Activated naive CD4-positive, alpha-beta T cell treated with anti-CD3 and anti-CD28 coated beads for 36 hours (primary cell): ENCODE measurements at regions of chr10 and their contacts with region 1.

Region 1: DNA sequence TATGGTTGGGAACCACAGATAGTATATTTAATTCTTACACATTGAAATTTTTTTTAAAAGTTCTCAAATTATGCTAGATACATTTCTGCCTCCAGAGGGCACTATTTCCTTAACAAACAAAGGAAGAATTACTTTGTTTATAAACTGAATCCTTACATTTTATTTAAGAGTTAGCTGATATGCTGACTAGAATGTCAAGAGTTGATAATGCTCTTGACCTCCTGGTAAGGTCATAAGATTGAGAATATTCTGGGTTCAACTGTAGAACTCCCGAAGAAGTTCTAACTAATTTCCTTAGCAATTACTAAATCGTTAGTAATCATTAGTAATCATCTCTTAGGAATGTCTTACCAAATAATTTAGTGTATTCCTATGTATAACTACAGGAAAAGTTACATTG is 95.3 kb upstream of the CYP26C1 start:
- DNase-seq: no peak
- H3K4me3 Mint-ChIP-seq: no peak overlapping the region
- H3K27ac Mint-ChIP-seq: no peak overlapping the region
- H3K4me1 Mint-ChIP-seq: no peaks in the 10 kb centered on the region
- H3K27me3 Mint-ChIP-seq: no peaks in the 10 kb centered on the region

Region 2: DNA sequence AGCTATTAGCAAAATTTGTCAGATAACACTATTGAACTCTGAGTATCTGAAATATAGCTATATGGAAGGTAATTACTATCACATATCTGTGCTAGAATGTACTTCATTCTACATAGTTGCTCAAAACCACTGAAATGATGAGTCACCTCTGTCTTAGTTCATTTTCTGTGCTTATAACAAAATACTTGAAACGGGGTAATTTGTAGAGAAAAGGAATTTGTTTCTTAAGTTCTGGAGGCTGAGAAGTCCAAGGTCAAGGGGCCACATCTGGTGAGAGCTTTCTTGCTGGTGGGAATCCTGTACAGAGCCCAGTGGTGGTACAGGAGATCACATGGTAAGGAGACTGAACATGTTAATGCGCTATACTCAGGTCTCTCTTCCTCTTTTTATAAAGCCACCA is 1209.0 kb before region 1 on chr10:
- CTCF ChIA-PET with region 1: no interaction called
- intact Hi-C with region 1: no loop called
- DNase-seq: no peak
- H3K4me3 Mint-ChIP-seq: no peak overlapping the region
- H3K27ac Mint-ChIP-seq: no peak overlapping the region
- H3K4me1 Mint-ChIP-seq: no peaks in the 10 kb centered on the region
- H3K27me3 Mint-ChIP-seq: peaks cover 6% of the 10 kb centered on the region

Region 3: GRCh38 chr10:92627845-92628480 is 337.4 kb before region 1 on chr10:
- CTCF ChIA-PET with region 1: no interaction called
- intact Hi-C with region 1: no loop called
- DNase-seq: no peak
- H3K4me3 Mint-ChIP-seq: no peak overlapping the region
- H3K27ac Mint-ChIP-seq: no peak overlapping the region
- H3K4me1 Mint-ChIP-seq: no peaks in the 10 kb centered on the region
- H3K27me3 Mint-ChIP-seq: no peaks in the 10 kb centered on the region

Region 4: DNA sequence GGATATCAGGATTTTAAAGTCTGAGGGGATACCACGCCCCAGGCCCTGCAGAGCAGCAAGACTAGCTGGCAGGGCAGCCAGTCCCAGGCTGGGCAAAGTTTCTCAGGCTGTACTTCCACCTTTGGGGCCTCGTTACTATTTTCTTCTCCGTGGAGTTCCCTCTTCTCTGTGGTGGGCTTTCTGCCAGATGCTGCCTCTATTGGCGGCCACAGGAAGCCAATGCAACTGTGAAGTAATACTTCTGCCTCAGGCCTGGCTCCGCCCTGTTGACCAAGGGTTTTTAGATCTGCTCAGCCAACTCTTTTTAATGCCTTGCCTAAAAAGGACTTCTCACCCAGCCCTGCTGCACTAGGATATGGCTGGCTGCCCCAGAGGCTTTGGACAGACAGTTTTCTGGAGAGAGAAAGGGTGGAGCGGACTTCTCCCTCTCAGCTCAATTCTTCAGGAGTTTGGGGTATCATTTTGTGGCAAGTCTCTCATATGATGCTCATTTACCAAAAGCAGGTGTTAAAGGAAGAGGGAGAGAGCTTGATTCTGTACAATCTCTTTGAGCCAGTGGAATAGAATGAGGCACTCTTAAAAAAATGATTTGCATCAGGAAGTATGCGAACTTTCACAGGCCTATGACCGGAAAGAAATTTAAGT is 208.1 kb before region 1 on chr10:
- CTCF ChIA-PET with region 1: no interaction called
- intact Hi-C with region 1: no loop called
- DNase-seq: no peak
- H3K4me3 Mint-ChIP-seq: no peak overlapping the region
- H3K27ac Mint-ChIP-seq: no peak overlapping the region
- H3K4me1 Mint-ChIP-seq: peaks cover 10% of the 10 kb centered on the region
- H3K27me3 Mint-ChIP-seq: no peaks in the 10 kb centered on the region

Region 5: DNA sequence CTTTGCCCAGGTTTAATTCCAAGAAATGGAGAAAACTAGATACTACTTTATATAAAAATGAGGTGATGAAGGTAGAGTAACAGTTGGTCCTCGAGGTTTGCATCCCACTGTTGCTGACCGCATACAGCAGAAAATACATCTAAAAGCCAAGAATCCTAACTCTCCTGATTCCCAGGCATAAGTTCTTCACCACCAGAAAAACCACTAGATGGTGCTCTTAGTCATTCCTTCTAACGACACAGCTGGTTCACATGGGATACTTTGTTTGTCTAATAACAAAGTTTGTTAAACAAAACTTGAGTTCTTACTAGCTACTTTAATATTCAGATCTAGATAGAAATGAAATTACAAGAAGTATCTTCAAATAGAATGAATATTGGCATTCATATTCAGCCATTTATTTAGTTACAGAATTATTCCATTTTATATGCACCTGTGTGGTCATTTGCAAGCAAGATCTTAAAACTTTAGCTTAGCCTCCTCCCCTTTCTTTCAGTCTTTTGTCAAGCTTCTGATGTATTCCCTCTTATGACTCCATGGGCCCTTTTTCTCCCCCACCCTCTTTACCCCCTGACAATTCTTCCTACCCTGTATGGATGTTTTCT is 41.2 kb after region 1 on chr10:
- CTCF ChIA-PET with region 1: interaction called, 7 read pairs
- intact Hi-C with region 1: loop called (anchors 5 kb)
- DNase-seq: no peak
- H3K4me3 Mint-ChIP-seq: no peak overlapping the region
- H3K27ac Mint-ChIP-seq: no peak overlapping the region
- H3K4me1 Mint-ChIP-seq: no peaks in the 10 kb centered on the region
- H3K27me3 Mint-ChIP-seq: no peaks in the 10 kb centered on the region

Region 6: DNA sequence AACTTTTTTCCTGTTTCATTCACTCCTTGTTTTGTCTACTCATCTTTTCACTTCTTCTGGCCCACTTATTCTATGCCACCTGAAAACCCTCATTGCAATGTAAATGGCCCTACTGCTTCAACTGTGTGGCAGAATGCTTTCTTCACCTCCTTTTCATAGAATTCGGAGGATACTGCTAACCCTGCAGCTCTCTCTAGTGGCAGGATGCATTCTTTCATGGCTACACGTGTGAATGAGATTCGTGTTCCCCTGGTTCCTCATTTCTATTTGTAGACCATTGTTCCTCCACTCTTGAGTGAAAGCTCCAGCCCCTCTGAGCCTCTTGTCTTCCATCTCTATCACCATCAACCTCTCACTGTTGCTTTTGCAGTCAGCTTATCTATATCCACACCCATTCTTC is 74.4 kb after region 1 on chr10:
- CTCF ChIA-PET with region 1: interaction called, 5 read pairs
- intact Hi-C with region 1: loop called (anchors 1 kb)
- DNase-seq: peak; percentile 26
- H3K4me3 Mint-ChIP-seq: no peak overlapping the region
- H3K27ac Mint-ChIP-seq: no peak overlapping the region
- H3K4me1 Mint-ChIP-seq: no peaks in the 10 kb centered on the region
- H3K27me3 Mint-ChIP-seq: no peaks in the 10 kb centered on the region

Region 7: DNA sequence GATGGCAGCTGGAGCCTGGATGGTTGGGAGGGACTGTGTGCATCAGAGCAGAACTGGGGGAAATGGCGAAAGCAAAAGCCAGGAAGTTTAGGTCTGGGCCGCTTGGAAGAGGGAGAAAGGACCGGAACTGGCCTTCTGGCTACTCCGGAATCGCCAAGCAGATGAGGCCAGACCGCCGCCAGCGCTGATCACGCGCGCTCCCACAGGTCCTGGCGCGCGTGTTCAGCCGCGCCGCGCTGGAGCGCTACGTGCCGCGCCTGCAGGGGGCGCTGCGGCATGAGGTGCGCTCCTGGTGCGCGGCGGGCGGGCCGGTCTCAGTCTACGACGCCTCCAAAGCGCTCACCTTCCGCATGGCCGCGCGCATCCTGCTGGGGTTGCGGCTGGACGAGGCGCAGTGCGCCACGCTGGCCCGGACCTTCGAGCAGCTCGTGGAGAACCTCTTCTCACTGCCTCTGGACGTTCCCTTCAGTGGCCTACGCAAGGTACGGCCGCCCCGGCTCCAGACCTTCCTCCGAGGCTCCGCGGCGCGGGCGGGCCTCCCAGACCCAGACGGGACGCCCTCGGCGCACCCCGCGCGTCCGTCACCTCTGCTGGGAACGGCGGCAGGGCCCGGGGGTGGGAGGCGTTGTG is 97.3 kb after region 1 on chr10:
- CTCF ChIA-PET with region 1: interaction called, 3 read pairs
- intact Hi-C with region 1: loop called (anchors 2 kb)
- DNase-seq: peak; percentile 64
- H3K4me3 Mint-ChIP-seq: peak overlapping the region; percentile 66
- H3K27ac Mint-ChIP-seq: no peak overlapping the region
- H3K4me1 Mint-ChIP-seq: peaks cover 22% of the 10 kb centered on the region
- H3K27me3 Mint-ChIP-seq: peaks cover 55% of the 10 kb centered on the region

Region 8: DNA sequence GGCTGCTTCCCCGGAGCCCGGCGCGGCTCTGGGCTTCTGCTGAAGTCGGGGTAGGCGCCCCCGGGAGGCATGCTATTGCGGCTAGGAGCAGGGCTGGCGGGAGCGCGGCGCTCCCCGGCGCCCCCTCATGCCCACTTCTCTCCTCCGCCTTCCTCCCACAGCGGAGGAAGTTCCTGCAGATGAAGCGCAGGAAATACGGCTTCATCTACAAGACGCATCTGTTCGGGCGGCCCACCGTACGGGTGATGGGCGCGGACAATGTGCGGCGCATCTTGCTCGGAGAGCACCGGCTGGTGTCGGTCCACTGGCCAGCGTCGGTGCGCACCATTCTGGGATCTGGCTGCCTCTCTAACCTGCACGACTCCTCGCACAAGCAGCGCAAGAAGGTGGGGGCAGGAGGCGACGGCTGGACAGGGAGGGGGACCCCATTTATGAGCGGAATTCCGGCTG is 108.9 kb after region 1 on chr10:
- CTCF ChIA-PET with region 1: interaction called, 11 read pairs
- intact Hi-C with region 1: no loop called
- DNase-seq: no peak
- H3K4me3 Mint-ChIP-seq: peak overlapping the region; percentile 62
- H3K27ac Mint-ChIP-seq: no peak overlapping the region
- H3K4me1 Mint-ChIP-seq: peaks cover 31% of the 10 kb centered on the region
- H3K27me3 Mint-ChIP-seq: peaks cover 69% of the 10 kb centered on the region

Region 9: DNA sequence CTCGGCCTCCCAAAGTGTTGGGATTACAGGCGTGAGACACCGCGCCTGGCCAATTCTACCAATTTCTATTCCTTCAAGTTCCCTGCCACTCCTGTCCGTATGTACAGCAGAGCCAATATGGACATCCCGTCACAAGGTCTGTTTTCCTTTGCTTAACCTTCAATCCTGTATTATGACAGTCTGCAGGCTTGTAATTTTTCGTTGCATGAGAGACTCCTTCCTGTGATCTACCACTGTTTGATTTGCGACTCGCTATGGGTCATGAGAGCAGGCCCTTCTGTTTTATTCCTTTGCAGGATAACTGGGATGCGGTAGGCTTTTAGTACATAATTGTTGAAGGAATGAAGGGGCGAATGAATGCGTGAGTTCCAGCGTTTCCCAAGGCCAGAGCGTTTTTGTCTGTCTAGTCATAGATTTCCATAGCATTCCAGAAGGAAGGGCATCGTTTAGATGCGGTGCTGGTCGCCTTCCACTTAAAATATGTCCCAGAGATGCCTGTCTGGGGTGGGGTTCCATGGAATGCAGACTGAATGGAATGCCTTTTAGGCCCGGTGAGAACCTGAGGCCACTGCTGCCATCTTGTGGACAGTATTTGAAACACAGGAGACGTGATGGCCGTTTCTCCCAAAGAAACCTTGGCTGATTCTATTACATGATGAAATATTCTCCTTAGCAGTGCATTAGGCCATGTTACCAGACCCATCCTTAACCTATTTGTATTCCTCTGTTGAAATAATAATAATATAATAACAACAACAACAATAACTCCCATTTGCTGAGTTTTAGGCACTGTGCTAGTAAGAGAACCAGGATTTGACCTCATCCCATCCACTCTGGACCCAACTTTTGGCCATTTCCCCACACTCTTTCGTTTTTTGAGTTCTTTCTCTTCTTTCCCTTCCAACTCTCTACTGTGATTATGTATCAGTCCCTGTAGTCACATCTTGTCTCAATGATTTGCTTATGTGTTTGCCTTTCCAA is 323.6 kb after region 1 on chr10:
- CTCF ChIA-PET with region 1: interaction called, 4 read pairs
- intact Hi-C with region 1: loop called (anchors 2 kb)
- DNase-seq: peak; percentile 73
- H3K4me3 Mint-ChIP-seq: no peak overlapping the region
- H3K27ac Mint-ChIP-seq: peak overlapping the region; percentile 10
- H3K4me1 Mint-ChIP-seq: no peaks in the 10 kb centered on the region
- H3K27me3 Mint-ChIP-seq: no peaks in the 10 kb centered on the region